Endothelial cell of umbilical vein (primary cell): ENCODE measurements at regions of chr1 and their contacts with region 1.

Region 1: DNA sequence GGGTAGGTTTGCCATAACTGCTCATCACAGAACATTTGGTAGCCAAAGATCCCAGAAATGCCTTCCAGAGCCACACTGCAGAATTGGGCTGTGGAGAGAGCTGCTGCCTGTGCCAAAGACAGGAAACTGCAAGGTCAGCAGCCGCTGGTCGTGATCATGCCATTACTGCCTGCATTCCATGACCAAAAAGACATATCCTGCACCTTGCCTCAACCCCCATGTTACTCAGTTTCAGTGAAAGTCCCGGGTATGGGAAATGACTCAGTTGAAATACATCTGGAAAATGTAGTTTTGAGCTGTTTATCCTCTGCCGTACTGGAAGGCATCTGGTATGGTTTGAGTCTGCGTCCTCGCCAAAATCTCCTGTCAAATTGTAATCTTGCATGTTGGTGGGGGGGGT is 161.7 kb downstream of the FCRL5 start:
- DNase-seq: peak; percentile 88
- H3K4me3 ChIP-seq: peak overlapping the region in 1 of 3 experiments; percentile 38
- H3K27ac ChIP-seq: peak overlapping the region; percentile 84
- H3K4me1 ChIP-seq: peaks cover 21% of the 10 kb centered on the region
- H3K27me3 ChIP-seq: no peaks in the 10 kb centered on the region
- CTCF ChIP-seq: no peak
- POLR2A ChIP-seq: no peak

Region 2: DNA sequence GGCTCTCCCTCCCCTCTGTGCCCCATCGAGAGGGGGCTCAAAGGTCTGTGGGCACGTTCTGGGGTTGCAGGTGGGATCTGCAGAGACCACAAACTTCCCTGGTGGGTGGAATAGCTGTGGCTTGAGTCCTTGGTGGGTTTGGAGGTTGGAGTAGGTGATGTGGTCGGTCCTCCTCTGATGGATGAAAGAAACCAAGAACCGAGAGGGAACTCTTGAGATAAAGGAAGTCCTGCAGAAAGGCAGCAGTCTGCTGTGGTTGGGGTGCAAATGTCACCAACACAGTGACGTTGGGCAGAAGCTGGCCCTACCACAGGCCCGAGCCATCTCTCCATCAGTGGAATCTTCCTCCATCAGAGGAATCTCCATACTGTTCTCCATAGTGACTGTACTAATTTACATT is 10.1 kb before region 1 on chr1:
- CTCF ChIA-PET with region 1: interaction called, 8 read pairs
- POLR2A ChIA-PET with region 1: interaction called, 3 read pairs
- dilution Hi-C with region 1: no loop called
- intact Hi-C with region 1: loop called (anchors 1 kb)
- DNase-seq: no peak
- H3K4me3 ChIP-seq: no peak overlapping the region
- H3K27ac ChIP-seq: no peak overlapping the region
- H3K4me1 ChIP-seq: no peaks in the 10 kb centered on the region
- H3K27me3 ChIP-seq: peaks cover 0 to 1% of the 10 kb centered on the region in 2 experiments
- CTCF ChIP-seq: no peak
- POLR2A ChIP-seq: no peak

Region 3: GRCh38 chr1:157407917-157408525 is 17.4 kb after region 1 on chr1:
- CTCF ChIA-PET with region 1: interaction called, 8 read pairs
- POLR2A ChIA-PET with region 1: no interaction called
- dilution Hi-C with region 1: no loop called
- intact Hi-C with region 1: loop called (anchors 2 kb)
- DNase-seq: no peak
- H3K4me3 ChIP-seq: no peak overlapping the region
- H3K27ac ChIP-seq: no peak overlapping the region
- H3K4me1 ChIP-seq: peaks cover 17% of the 10 kb centered on the region
- H3K27me3 ChIP-seq: no peaks in the 10 kb centered on the region
- CTCF ChIP-seq: no peak
- POLR2A ChIP-seq: no peak

Region 4: DNA sequence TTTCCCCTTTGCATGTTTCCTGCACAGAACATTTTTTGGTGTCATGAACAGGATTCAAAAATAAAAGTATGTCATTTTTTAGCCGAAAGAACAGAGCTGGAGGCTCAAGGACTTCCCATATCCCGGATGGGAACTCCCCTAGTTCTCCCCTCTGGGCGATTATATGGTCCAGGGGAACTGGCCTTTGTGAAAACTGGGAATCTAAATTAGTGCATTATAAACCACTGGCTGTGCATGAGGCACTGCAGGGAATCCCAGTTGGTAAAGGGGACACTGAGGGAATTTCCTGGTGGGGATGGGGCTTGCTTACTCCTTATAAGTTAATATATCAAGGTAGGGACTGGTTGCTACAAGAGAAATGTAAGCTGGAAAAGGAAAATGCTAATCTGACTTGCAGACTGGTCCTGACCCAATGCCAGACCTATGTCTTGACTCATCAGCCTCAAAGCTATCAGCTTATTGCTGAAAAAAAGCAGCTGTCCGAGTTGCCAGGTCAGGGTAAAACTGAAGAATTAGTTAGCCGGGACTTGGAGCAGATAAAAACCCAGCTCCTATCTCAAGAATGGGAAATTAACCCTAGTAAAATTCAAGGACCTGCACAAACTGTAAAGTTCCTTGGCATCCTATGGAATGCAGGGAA is 39.1 kb after region 1 on chr1:
- CTCF ChIA-PET with region 1: interaction called, 3 read pairs
- POLR2A ChIA-PET with region 1: no interaction called
- dilution Hi-C with region 1: no loop called
- intact Hi-C with region 1: loop called (anchors 5 kb)
- DNase-seq: no peak
- H3K4me3 ChIP-seq: no peak overlapping the region
- H3K27ac ChIP-seq: no peak overlapping the region
- H3K4me1 ChIP-seq: no peaks in the 10 kb centered on the region
- H3K27me3 ChIP-seq: peaks cover 0 to 1% of the 10 kb centered on the region in 2 experiments
- CTCF ChIP-seq: no peak
- POLR2A ChIP-seq: no peak